ENCODE measurements at regions of chr2 and their contacts with region 1.

Region 1: GRCh38 chr2:24971536-24972314 is at the start of gene DNAJC27:
- H3K4me3 ChIP-seq: peak within 1 kb of the TSS; percentile 86
- H3K27ac ChIP-seq: peak within 1 kb of the TSS; percentile 98
- H3K4me1 ChIP-seq: no peaks in the 10 kb centered on the region; the same call in 1 of the 2 replicates
- CTCF ChIP-seq: peak; percentile 75

Region 2: DNA sequence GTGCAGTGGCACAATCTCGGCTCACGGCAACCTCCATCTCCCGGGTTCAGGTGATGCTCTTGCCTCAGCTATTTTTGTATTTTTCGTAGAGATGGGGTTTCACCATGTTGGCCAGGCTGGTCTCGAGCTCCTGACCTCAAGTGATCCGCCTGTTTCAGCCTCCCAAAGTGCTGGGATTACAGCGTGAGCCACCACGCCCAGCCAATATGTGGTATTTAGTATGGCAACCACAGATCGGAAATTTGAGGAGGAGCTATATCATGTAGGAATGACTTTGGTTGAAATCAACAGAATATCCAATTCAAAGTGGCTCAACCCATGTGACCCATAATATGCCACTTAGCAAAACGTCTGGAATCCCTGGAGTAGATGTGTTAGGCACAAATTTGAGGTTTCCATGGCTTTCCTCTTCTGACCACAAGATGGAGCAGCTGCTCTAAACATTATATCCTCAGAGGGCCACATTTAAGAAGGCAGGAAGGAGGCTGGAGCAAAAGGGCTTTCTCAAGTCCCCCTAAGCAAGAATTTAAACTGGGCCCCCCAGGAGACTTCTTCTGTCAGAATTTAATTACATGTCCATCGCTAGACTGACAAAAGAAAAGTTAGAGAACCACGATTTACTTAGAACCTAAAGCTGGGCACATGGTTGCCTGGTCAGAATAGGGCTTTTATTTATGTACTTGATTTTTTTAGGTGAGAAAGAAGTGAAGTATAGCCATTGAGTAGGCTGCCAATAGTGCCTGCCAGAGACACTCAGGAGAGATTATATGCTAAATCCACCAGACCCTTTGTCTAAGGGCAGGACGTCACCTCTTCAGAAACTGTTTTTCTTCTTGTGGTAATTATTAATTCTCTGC is 561.8 kb before region 1 on chr2:
- CTCF ChIA-PET with region 1: interaction called, 16 read pairs
- POLR2A ChIA-PET with region 1: no interaction called
- H3K4me3 ChIP-seq: no peak overlapping the region
- H3K27ac ChIP-seq: no peak overlapping the region
- H3K4me1 ChIP-seq: no peaks in the 10 kb centered on the region
- CTCF ChIP-seq: peak; percentile 54; the same call in 1 of the 2 replicates

Region 3: GRCh38 chr2:24945907-24946306 is 25.8 kb before region 1 on chr2:
- CTCF ChIA-PET with region 1: no interaction called
- POLR2A ChIA-PET with region 1: no interaction called
- H3K4me3 ChIP-seq: no peak overlapping the region
- H3K27ac ChIP-seq: no peak overlapping the region
- H3K4me1 ChIP-seq: no peaks in the 10 kb centered on the region
- CTCF ChIP-seq: no peak

Region 4: GRCh38 chr2:25009954-25010353 is 38.2 kb after region 1 on chr2:
- CTCF ChIA-PET with region 1: interaction called, 15 read pairs
- POLR2A ChIA-PET with region 1: no interaction called
- H3K4me3 ChIP-seq: no peak overlapping the region
- H3K27ac ChIP-seq: no peak overlapping the region; the same call in 1 of the 2 replicates
- H3K4me1 ChIP-seq: peaks cover 9% of the 10 kb centered on the region; the same call in 1 of the 2 replicates
- CTCF ChIP-seq: no peak

Region 5: DNA sequence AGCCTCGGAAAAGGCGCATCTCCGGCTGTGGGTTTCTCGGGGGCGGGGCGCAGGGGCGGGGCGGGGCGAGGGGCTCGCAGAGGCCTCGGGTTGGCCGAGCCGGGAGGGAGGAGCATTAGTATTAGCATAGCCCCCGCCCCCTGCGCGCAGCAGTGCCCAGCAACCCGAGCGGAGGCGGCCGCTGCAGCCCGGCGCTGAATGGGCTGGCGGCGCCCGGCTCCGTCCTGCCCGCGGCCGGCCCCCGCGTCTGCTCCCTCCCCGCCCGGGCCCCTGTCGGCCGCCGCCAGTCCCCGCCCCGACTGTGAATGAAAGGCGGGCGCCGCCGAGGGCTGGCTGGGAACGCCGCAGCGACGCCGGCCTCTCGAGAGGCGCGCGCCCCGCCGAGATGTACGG is 70.2 kb after region 1 on chr2 and contains the start of gene EFR3B:
- CTCF ChIA-PET with region 1: interaction called, 23 read pairs
- POLR2A ChIA-PET with region 1: interaction called, 8 read pairs
- H3K4me3 ChIP-seq: peak within 1 kb of the TSS; percentile 72
- H3K27ac ChIP-seq: peak within 1 kb of the TSS; percentile 79
- H3K4me1 ChIP-seq: peaks cover 10% of the 10 kb centered on the region
- CTCF ChIP-seq: no peak

Region 6: GRCh38 chr2:25123682-25124081 is 152.0 kb after region 1 on chr2:
- CTCF ChIA-PET with region 1: interaction called, 114 read pairs
- POLR2A ChIA-PET with region 1: interaction called, 10 read pairs
- H3K4me3 ChIP-seq: no peak overlapping the region
- H3K27ac ChIP-seq: no peak overlapping the region
- H3K4me1 ChIP-seq: no peaks in the 10 kb centered on the region
- CTCF ChIP-seq: no peak

Region 7: GRCh38 chr2:25165992-25166875 is 194.5 kb after region 1 on chr2:
- CTCF ChIA-PET with region 1: interaction called, 11 read pairs
- POLR2A ChIA-PET with region 1: no interaction called
- H3K4me3 ChIP-seq: no peak overlapping the region
- H3K27ac ChIP-seq: no peak overlapping the region
- H3K4me1 ChIP-seq: no peaks in the 10 kb centered on the region
- CTCF ChIP-seq: peak; percentile 57

Region 8: GRCh38 chr2:25184261-25184695 is 212.6 kb after region 1 on chr2:
- CTCF ChIA-PET with region 1: no interaction called
- POLR2A ChIA-PET with region 1: no interaction called
- H3K4me3 ChIP-seq: no peak overlapping the region
- H3K27ac ChIP-seq: no peak overlapping the region
- H3K4me1 ChIP-seq: no peaks in the 10 kb centered on the region
- CTCF ChIP-seq: no peak

Region 9: DNA sequence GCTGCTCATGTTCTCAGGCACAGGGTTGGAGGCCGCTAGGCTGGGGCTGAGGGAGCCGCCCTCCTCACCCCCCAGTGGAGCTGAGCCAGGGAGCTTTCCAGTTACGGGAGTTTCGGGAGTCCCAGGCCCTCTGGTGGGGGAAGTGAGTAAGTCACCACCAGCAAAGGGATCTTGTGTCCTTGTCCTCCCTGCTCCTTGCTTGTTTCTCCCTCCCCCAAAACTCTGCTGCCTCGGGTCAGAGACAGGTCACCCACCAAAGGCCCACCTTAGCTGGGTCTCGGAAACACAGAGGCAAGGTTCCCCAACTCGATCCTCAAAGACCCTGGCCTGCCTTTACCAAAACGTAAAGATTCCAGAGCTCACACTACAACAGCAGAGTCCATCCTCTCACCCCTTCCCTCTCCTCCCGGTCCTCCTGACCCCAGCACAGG is 257.1 kb after region 1 on chr2:
- CTCF ChIA-PET with region 1: interaction called, 13 read pairs
- POLR2A ChIA-PET with region 1: no interaction called
- H3K4me3 ChIP-seq: no peak overlapping the region
- H3K27ac ChIP-seq: no peak overlapping the region
- H3K4me1 ChIP-seq: peaks cover 2% of the 10 kb centered on the region; the same call in 1 of the 2 replicates
- CTCF ChIP-seq: peak; percentile 81